CD4-positive, alpha-beta T cell (primary cell): ENCODE measurements at regions of chr2 and their contacts with region 1.

Region 1: GRCh38 chr2:161954103-161954502 is 119.9 kb downstream of the DPP4 start:
- DNase-seq: peak in 4 of 14 experiments; percentile 34 to 80 (median 74)
- ATAC-seq: peak; percentile 76
- H3K4me3 ChIP-seq: no peak overlapping the region
- H3K4me3 Mint-ChIP-seq: peak overlapping the region; percentile 12
- H3K27ac ChIP-seq: no peak overlapping the region
- H3K27ac Mint-ChIP-seq: peak overlapping the region; percentile 1
- H3K4me1 ChIP-seq: peaks cover 33% of the 10 kb centered on the region
- H3K4me1 Mint-ChIP-seq: peaks cover 52% of the 10 kb centered on the region
- H3K27me3 ChIP-seq: no peaks in the 10 kb centered on the region
- H3K27me3 Mint-ChIP-seq: no peaks in the 10 kb centered on the region
- CTCF ChIP-seq: no peak

Region 2: GRCh38 chr2:161662373-161662772 is 291.7 kb before region 1 on chr2:
- CTCF ChIA-PET with region 1: no interaction called
- POLR2A ChIA-PET with region 1: no interaction called
- intact Hi-C with region 1: no loop called
- DNase-seq: no peak
- ATAC-seq: no peak
- H3K4me3 ChIP-seq: no peak overlapping the region
- H3K4me3 Mint-ChIP-seq: no peak overlapping the region
- H3K27ac ChIP-seq: no peak overlapping the region
- H3K27ac Mint-ChIP-seq: no peak overlapping the region
- H3K4me1 ChIP-seq: no peaks in the 10 kb centered on the region
- H3K4me1 Mint-ChIP-seq: no peaks in the 10 kb centered on the region
- H3K27me3 ChIP-seq: no peaks in the 10 kb centered on the region
- H3K27me3 Mint-ChIP-seq: peaks cover 3% of the 10 kb centered on the region
- CTCF ChIP-seq: no peak

Region 3: GRCh38 chr2:161913865-161914264 is 40.2 kb before region 1 on chr2:
- CTCF ChIA-PET with region 1: no interaction called
- POLR2A ChIA-PET with region 1: no interaction called
- intact Hi-C with region 1: no loop called
- DNase-seq: no peak
- ATAC-seq: no peak
- H3K4me3 ChIP-seq: no peak overlapping the region
- H3K4me3 Mint-ChIP-seq: no peak overlapping the region
- H3K27ac ChIP-seq: no peak overlapping the region
- H3K27ac Mint-ChIP-seq: no peak overlapping the region
- H3K4me1 ChIP-seq: no peaks in the 10 kb centered on the region
- H3K4me1 Mint-ChIP-seq: no peaks in the 10 kb centered on the region
- H3K27me3 ChIP-seq: no peaks in the 10 kb centered on the region
- H3K27me3 Mint-ChIP-seq: no peaks in the 10 kb centered on the region
- CTCF ChIP-seq: no peak

Region 4: DNA sequence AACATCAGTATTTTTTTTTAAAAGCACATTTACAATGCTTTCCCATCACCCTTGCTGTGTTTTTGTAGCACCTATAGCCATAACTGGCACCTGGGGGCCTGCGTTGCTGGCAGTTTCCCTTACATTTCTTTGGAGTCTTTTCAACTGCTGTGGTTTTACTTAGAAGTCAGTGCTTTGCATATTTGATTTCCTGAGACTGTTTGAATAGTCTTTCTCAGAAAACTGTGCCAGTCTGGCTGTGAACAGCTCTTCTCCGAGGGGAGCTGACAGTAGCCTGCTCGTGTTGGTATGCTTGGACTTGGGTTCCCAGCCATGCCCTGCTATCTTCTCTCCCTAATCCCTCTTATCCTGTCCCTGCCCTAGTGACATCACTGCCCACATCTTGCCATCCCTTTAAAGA is 38.4 kb after region 1 on chr2:
- CTCF ChIA-PET with region 1: no interaction called
- POLR2A ChIA-PET with region 1: interaction called, 4 read pairs
- intact Hi-C with region 1: loop called in 1 of 2 experiments (anchors 5 kb)
- DNase-seq: peak; percentile 18 to 83 (median 44)
- ATAC-seq: peak; percentile 75
- H3K4me3 ChIP-seq: peak overlapping the region; percentile 27
- H3K4me3 Mint-ChIP-seq: peak overlapping the region; percentile 88
- H3K27ac ChIP-seq: peak overlapping the region; percentile 65 to 78
- H3K27ac Mint-ChIP-seq: peak overlapping the region; percentile 94
- H3K4me1 ChIP-seq: peaks cover 34% of the 10 kb centered on the region
- H3K4me1 Mint-ChIP-seq: peaks cover 51% of the 10 kb centered on the region
- H3K27me3 ChIP-seq: no peaks in the 10 kb centered on the region
- H3K27me3 Mint-ChIP-seq: no peaks in the 10 kb centered on the region
- CTCF ChIP-seq: no peak

Region 5: GRCh38 chr2:162103446-162104009 is 149.4 kb after region 1 on chr2:
- CTCF ChIA-PET with region 1: no interaction called
- POLR2A ChIA-PET with region 1: no interaction called
- intact Hi-C with region 1: no loop called
- DNase-seq: no peak
- ATAC-seq: no peak
- H3K4me3 ChIP-seq: no peak overlapping the region
- H3K4me3 Mint-ChIP-seq: no peak overlapping the region
- H3K27ac ChIP-seq: no peak overlapping the region
- H3K27ac Mint-ChIP-seq: no peak overlapping the region
- H3K4me1 ChIP-seq: no peaks in the 10 kb centered on the region
- H3K4me1 Mint-ChIP-seq: no peaks in the 10 kb centered on the region
- H3K27me3 ChIP-seq: no peaks in the 10 kb centered on the region
- H3K27me3 Mint-ChIP-seq: no peaks in the 10 kb centered on the region
- CTCF ChIP-seq: no peak